ENCODE measurements at regions of chr1 and their contacts with region 1.

Region 1: GRCh38 chr1:198088360-198089071 is 68.3 kb upstream of the NEK7 start:
- DNase-seq: no peak
- ATAC-seq: peak; percentile 42
- H3K4me3 Mint-ChIP-seq: no peak overlapping the region
- H3K27ac Mint-ChIP-seq: no peak overlapping the region
- H3K4me1 Mint-ChIP-seq: no peaks in the 10 kb centered on the region
- H3K27me3 Mint-ChIP-seq: peaks cover 6% of the 10 kb centered on the region
- CTCF ChIP-seq: no peak

Region 2: GRCh38 chr1:198167436-198167934 is 79.0 kb after region 1 on chr1:
- CTCF ChIA-PET with region 1: no interaction called
- POLR2A ChIA-PET with region 1: no interaction called
- intact Hi-C with region 1: no loop called
- DNase-seq: no peak
- ATAC-seq: peak; percentile 52
- H3K4me3 Mint-ChIP-seq: peak overlapping the region; percentile 12
- H3K27ac Mint-ChIP-seq: peak overlapping the region; percentile 79
- H3K4me1 Mint-ChIP-seq: peaks cover 74% of the 10 kb centered on the region
- H3K27me3 Mint-ChIP-seq: no peaks in the 10 kb centered on the region
- CTCF ChIP-seq: no peak

Region 3: DNA sequence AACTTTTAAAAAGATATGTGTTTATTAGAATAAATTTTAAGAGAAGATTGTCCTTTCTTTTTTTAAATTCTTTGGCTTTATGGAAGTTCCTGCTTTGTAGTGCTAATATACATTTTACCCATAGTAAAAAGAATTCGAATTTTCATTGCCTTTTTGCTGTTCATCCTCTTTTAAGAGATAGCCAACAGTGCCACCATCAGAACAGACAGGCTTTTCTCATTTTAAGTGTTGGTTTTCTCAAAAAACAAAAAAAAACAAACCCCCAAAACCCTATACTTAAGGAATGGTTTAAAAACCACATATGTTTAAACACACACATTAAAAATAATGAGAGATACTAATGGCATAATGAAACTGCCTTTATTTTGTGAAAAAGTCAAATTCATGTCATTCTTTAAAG is 187.1 kb after region 1 on chr1:
- CTCF ChIA-PET with region 1: no interaction called
- POLR2A ChIA-PET with region 1: no interaction called
- intact Hi-C with region 1: loop called (anchors 5 kb)
- DNase-seq: no peak
- ATAC-seq: no peak
- H3K4me3 Mint-ChIP-seq: no peak overlapping the region
- H3K27ac Mint-ChIP-seq: no peak overlapping the region
- H3K4me1 Mint-ChIP-seq: peaks cover 1% of the 10 kb centered on the region
- H3K27me3 Mint-ChIP-seq: no peaks in the 10 kb centered on the region
- CTCF ChIP-seq: no peak

Region 4: DNA sequence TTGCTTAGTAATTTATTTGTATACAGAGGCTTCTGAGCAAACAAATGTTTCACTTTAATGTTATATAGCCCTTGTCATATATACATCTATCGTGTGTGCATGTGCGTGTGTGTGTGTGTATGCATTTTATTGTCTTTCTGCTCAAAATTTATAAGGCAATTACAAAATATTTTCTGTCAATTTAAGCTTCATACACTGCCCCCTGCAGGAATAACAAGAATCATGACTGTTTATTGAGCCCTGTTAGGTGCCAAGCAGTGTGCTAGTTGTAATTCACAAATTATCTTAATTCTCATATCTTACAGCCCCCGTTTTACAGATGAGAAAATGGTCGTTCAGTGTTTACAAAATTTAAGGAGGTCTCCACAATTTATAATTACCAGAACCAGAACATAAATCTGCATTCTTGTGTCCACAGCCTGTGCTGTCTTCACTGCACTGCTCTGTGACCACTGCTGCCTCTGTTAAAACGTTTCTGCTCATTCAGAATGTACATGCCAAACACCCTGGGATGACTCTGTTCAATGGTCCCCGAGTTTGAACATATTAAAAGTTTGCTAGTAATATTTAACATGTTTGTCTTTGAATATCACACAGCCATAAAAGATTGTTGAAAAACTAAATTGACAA is 270.6 kb after region 1 on chr1:
- CTCF ChIA-PET with region 1: interaction called, 5 read pairs
- POLR2A ChIA-PET with region 1: no interaction called
- intact Hi-C with region 1: loop called (anchors 1 kb)
- DNase-seq: no peak
- ATAC-seq: no peak
- H3K4me3 Mint-ChIP-seq: no peak overlapping the region
- H3K27ac Mint-ChIP-seq: no peak overlapping the region
- H3K4me1 Mint-ChIP-seq: no peaks in the 10 kb centered on the region
- H3K27me3 Mint-ChIP-seq: peaks cover 11% of the 10 kb centered on the region
- CTCF ChIP-seq: no peak

Region 5: DNA sequence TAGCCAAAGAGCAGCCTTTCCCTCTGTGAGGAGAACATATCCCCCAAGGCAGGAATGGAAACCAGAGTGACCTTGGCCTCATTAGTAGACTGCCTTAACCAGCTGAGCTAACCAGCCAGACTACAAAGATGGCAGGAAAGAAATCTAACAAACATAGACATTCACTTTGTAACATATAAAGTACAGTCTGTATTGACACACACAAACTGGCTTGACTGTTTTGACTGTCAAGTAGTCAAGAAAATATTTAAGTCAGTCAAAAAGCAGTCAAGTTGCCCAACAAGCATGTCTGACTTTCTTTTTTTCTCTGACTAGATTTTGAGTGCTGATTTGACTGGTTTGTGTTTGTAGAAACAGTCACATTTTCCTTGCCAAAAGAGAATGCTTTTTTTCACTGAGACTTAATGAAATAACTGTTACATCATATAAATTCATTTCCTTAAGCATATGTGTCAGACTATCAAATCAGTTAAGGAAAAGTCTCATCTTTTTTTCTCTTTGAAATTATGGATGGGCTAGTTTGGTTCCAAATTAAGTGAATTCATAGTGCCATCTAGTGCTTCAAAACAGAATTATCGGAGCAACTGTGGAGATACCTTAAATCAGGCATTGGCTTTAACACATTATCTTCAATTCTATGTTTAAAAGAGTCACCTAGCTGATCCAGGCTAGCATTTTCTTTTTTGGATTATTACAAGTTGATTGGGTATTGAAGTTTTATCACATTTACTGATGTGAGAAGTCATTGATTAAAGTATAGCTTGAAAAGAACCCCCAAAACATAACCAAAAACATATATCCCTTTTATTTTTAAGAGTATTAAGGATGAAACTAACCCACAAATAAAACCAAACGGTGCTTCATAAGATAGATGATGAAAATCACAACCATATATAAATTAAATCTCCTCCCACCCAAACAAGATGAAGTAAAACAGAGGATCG is 377.0 kb after region 1 on chr1:
- CTCF ChIA-PET with region 1: interaction called, 7 read pairs
- POLR2A ChIA-PET with region 1: no interaction called
- intact Hi-C with region 1: loop called (anchors 1 kb)
- DNase-seq: no peak
- ATAC-seq: peak; percentile 49
- H3K4me3 Mint-ChIP-seq: no peak overlapping the region
- H3K27ac Mint-ChIP-seq: no peak overlapping the region
- H3K4me1 Mint-ChIP-seq: no peaks in the 10 kb centered on the region
- H3K27me3 Mint-ChIP-seq: no peaks in the 10 kb centered on the region
- CTCF ChIP-seq: no peak

Region 6: DNA sequence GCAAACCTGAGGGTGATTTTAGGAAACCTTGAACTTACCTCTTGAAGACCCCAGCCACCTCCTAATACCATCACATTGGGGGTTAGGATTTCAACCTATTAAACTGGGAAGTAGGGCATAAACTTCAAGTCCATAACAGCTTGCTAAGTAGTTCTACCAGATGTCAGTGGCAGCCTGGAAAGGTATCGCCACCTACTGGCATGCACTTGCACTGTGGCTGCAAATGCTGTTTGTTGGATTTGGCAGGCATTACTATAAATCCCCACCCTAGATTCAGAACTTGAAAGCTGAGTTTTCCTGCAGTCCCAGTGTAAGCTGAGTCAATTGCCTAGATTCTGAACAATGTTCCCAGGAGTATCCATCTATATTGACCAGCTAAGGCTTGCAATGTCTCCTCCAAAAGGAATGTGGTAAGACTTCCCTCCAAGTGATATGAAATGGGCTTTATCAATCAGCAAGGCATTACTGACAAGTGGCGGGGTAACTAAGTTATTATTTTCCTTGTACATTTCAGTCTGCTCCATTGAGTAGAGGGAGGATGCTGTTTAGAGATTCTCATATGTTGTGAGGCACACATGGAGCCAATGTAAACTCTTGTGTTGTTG is 1024.9 kb after region 1 on chr1:
- CTCF ChIA-PET with region 1: no interaction called
- POLR2A ChIA-PET with region 1: no interaction called
- intact Hi-C with region 1: loop called (anchors 10 kb)
- DNase-seq: peak; percentile 21
- ATAC-seq: peak; percentile 57
- H3K4me3 Mint-ChIP-seq: no peak overlapping the region
- H3K27ac Mint-ChIP-seq: no peak overlapping the region
- H3K4me1 Mint-ChIP-seq: peaks cover 5% of the 10 kb centered on the region
- H3K27me3 Mint-ChIP-seq: no peaks in the 10 kb centered on the region
- CTCF ChIP-seq: no peak